CD8-positive, alpha-beta T cell (primary cell): ENCODE measurements at regions of chr16 and their contacts with region 1.

Region 1: DNA sequence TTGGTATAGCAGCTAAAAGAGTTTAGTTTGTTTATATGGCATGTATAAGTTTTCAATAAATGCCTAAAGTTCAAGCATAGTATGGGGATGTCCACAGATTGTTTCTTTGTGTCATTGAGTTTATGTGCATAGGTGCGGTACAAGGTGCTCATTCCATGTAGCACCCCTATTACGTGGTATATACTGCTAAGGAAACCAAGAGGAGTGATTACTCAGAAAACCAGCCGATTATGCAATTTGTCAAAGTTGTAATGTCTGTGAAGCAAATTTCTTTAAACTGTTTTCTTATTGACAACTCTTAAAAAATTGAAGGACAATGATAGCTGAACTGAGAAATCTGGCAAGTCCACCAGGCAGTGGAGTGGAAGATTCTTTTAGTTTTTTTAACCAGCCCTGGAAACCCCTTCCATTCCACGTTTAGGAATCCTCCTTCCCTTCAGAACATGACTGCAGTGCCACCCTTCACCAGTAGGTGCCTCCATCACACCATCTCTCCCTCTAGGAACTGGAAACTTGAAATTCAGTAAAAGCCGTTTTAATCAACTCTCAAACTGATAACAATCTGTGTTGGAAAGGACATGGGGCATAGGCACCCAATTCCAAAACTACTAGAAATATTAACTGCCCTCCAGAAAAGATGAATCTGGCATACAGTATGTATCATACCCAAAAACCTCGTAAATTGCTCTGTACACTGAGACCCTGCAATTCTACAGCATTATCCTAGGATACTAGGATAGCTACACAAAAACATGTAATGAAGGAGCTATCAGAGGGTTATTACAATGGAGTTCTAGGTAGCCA is 43.5 kb downstream of the REXO5 start:
- DNase-seq: peak; percentile 37 to 76 (median 66)
- ATAC-seq: peak; percentile 73
- H3K4me3 ChIP-seq: no peak overlapping the region
- H3K4me3 Mint-ChIP-seq: no peak overlapping the region
- H3K27ac ChIP-seq: no peak overlapping the region
- H3K27ac Mint-ChIP-seq: no peak overlapping the region
- H3K4me1 ChIP-seq: peaks cover 6% of the 10 kb centered on the region
- H3K4me1 Mint-ChIP-seq: peaks cover 13% of the 10 kb centered on the region
- H3K27me3 ChIP-seq: no peaks in the 10 kb centered on the region
- H3K27me3 Mint-ChIP-seq: no peaks in the 10 kb centered on the region
- CTCF ChIP-seq: peak; percentile 99

Region 2: GRCh38 chr16:20799599-20799998 is 50.2 kb before region 1 on chr16:
- CTCF ChIA-PET with region 1: interaction called, 3 read pairs
- POLR2A ChIA-PET with region 1: no interaction called
- intact Hi-C with region 1: loop called in 1 of 2 experiments (anchors 2 kb)
- DNase-seq: peak in 1 of 9 experiments; percentile 14
- ATAC-seq: no peak
- H3K4me3 ChIP-seq: no peak overlapping the region
- H3K4me3 Mint-ChIP-seq: no peak overlapping the region
- H3K27ac ChIP-seq: no peak overlapping the region
- H3K27ac Mint-ChIP-seq: no peak overlapping the region
- H3K4me1 ChIP-seq: peaks cover 7% of the 10 kb centered on the region
- H3K4me1 Mint-ChIP-seq: peaks cover 15% of the 10 kb centered on the region
- H3K27me3 ChIP-seq: no peaks in the 10 kb centered on the region
- H3K27me3 Mint-ChIP-seq: no peaks in the 10 kb centered on the region
- CTCF ChIP-seq: peak; percentile 48

Region 3: GRCh38 chr16:20866145-20866772 is 16.5 kb after region 1 on chr16:
- CTCF ChIA-PET with region 1: interaction called, 23 read pairs
- POLR2A ChIA-PET with region 1: interaction called, 4 read pairs
- intact Hi-C with region 1: no loop called
- DNase-seq: no peak
- ATAC-seq: no peak
- H3K4me3 ChIP-seq: no peak overlapping the region
- H3K4me3 Mint-ChIP-seq: no peak overlapping the region
- H3K27ac ChIP-seq: no peak overlapping the region
- H3K27ac Mint-ChIP-seq: no peak overlapping the region
- H3K4me1 ChIP-seq: no peaks in the 10 kb centered on the region
- H3K4me1 Mint-ChIP-seq: peaks cover 11% of the 10 kb centered on the region
- H3K27me3 ChIP-seq: no peaks in the 10 kb centered on the region
- H3K27me3 Mint-ChIP-seq: no peaks in the 10 kb centered on the region
- CTCF ChIP-seq: no peak

Region 4: DNA sequence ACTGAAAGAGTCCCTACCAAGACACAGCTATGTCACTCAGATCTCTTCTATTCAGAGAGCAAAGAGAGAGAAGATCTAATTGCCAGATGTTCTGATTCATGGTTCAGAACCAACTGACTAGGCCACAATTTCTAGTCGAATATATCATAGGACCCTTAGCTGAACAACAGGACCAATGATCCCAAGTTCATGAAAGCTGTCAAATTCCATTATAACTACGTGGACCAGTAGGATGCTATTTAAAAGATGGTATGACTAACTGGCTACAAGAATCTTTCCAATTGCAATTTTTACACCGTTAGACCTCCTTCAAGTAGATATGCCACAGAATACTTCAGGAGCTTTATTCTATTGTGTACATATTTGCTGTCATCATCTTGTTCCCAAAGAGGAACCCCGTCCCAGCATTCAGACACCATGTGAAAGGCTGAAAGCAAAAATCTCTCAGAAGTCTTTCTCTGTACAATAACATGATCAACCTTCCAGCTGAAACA is 24.3 kb after region 1 on chr16:
- CTCF ChIA-PET with region 1: interaction called, 42 read pairs
- POLR2A ChIA-PET with region 1: no interaction called
- intact Hi-C with region 1: loop called in 1 of 2 experiments (anchors 2 kb)
- DNase-seq: no peak
- ATAC-seq: no peak
- H3K4me3 ChIP-seq: no peak overlapping the region
- H3K4me3 Mint-ChIP-seq: peak overlapping the region; percentile 75
- H3K27ac ChIP-seq: peak overlapping the region; percentile 44 to 78
- H3K27ac Mint-ChIP-seq: peak overlapping the region; percentile 88
- H3K4me1 ChIP-seq: peaks cover 22% of the 10 kb centered on the region
- H3K4me1 Mint-ChIP-seq: peaks cover 36% of the 10 kb centered on the region
- H3K27me3 ChIP-seq: no peaks in the 10 kb centered on the region
- H3K27me3 Mint-ChIP-seq: no peaks in the 10 kb centered on the region
- CTCF ChIP-seq: no peak

Region 5: DNA sequence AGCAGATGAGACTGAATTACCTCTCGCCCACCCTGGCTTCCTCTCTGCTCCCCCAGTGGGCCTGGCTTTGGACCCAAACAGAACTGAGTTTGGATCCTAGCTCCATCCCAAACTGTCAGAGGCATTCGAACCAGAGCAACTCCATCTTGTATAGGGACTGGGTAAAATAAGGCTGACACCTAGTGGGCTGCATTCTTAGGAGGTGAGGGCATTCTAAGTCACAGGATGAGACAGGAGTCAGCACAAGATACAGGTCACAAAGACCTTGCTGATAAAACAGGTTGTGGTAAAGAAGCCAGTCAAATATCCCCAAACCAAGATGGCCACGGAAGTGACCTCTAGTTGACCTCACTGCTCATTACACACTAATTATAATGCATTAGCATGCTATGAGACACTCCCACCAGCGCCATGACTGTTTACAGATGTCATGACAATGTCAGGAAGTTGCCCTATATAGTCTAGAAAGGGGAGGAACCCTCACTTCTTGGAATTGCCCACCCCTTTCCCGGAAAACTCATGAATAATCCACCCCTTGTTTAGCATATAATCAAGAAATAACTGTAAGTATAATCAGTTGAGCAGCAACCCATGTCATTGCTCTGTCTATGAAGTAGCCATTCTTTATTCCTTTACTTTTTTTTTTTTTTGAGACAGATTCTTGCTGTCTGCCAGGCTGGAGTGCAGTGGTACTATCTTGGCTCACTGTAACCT is 95.2 kb after region 1 on chr16:
- CTCF ChIA-PET with region 1: interaction called, 13 read pairs
- POLR2A ChIA-PET with region 1: no interaction called
- intact Hi-C with region 1: loop called (anchors 1 to 2 kb)
- DNase-seq: peak in 3 of 9 experiments; percentile 14 to 32 (median 24)
- ATAC-seq: peak; percentile 44
- H3K4me3 ChIP-seq: no peak overlapping the region
- H3K4me3 Mint-ChIP-seq: no peak overlapping the region
- H3K27ac ChIP-seq: no peak overlapping the region
- H3K27ac Mint-ChIP-seq: no peak overlapping the region
- H3K4me1 ChIP-seq: no peaks in the 10 kb centered on the region
- H3K4me1 Mint-ChIP-seq: peaks cover 10% of the 10 kb centered on the region
- H3K27me3 ChIP-seq: no peaks in the 10 kb centered on the region
- H3K27me3 Mint-ChIP-seq: no peaks in the 10 kb centered on the region
- CTCF ChIP-seq: no peak

Region 6: GRCh38 chr16:21083729-21084268 is 234.0 kb after region 1 on chr16:
- CTCF ChIA-PET with region 1: interaction called, 26 read pairs
- POLR2A ChIA-PET with region 1: interaction called, 3 read pairs
- intact Hi-C with region 1: loop called in 1 of 2 experiments (anchors 1 kb)
- DNase-seq: peak; percentile 11 to 62 (median 46)
- ATAC-seq: no peak
- H3K4me3 ChIP-seq: no peak overlapping the region
- H3K4me3 Mint-ChIP-seq: no peak overlapping the region
- H3K27ac ChIP-seq: no peak overlapping the region
- H3K27ac Mint-ChIP-seq: no peak overlapping the region
- H3K4me1 ChIP-seq: no peaks in the 10 kb centered on the region
- H3K4me1 Mint-ChIP-seq: no peaks in the 10 kb centered on the region
- H3K27me3 ChIP-seq: no peaks in the 10 kb centered on the region
- H3K27me3 Mint-ChIP-seq: peaks cover 21% of the 10 kb centered on the region
- CTCF ChIP-seq: peak; percentile 56

Region 7: GRCh38 chr16:21101631-21102420 is 252.0 kb after region 1 on chr16:
- CTCF ChIA-PET with region 1: interaction called, 11 read pairs
- POLR2A ChIA-PET with region 1: no interaction called
- intact Hi-C with region 1: loop called (anchors 1 to 5 kb)
- DNase-seq: peak in 6 of 9 experiments; percentile 2 to 24 (median 13)
- ATAC-seq: no peak
- H3K4me3 ChIP-seq: no peak overlapping the region
- H3K4me3 Mint-ChIP-seq: no peak overlapping the region
- H3K27ac ChIP-seq: no peak overlapping the region
- H3K27ac Mint-ChIP-seq: no peak overlapping the region
- H3K4me1 ChIP-seq: no peaks in the 10 kb centered on the region
- H3K4me1 Mint-ChIP-seq: no peaks in the 10 kb centered on the region
- H3K27me3 ChIP-seq: no peaks in the 10 kb centered on the region
- H3K27me3 Mint-ChIP-seq: peaks cover 19% of the 10 kb centered on the region
- CTCF ChIP-seq: peak; percentile 17

Region 8: GRCh38 chr16:21244518-21245215 is 394.9 kb after region 1 on chr16:
- CTCF ChIA-PET with region 1: no interaction called
- POLR2A ChIA-PET with region 1: no interaction called
- intact Hi-C with region 1: no loop called
- DNase-seq: no peak
- ATAC-seq: no peak
- H3K4me3 ChIP-seq: no peak overlapping the region
- H3K4me3 Mint-ChIP-seq: no peak overlapping the region
- H3K27ac ChIP-seq: no peak overlapping the region
- H3K27ac Mint-ChIP-seq: no peak overlapping the region
- H3K4me1 ChIP-seq: no peaks in the 10 kb centered on the region
- H3K4me1 Mint-ChIP-seq: no peaks in the 10 kb centered on the region
- H3K27me3 ChIP-seq: no peaks in the 10 kb centered on the region
- H3K27me3 Mint-ChIP-seq: peaks cover 20% of the 10 kb centered on the region
- CTCF ChIP-seq: no peak